K562 (cell line): ENCODE measurements at regions of chr2 and their contacts with region 1.

Region 1: DNA sequence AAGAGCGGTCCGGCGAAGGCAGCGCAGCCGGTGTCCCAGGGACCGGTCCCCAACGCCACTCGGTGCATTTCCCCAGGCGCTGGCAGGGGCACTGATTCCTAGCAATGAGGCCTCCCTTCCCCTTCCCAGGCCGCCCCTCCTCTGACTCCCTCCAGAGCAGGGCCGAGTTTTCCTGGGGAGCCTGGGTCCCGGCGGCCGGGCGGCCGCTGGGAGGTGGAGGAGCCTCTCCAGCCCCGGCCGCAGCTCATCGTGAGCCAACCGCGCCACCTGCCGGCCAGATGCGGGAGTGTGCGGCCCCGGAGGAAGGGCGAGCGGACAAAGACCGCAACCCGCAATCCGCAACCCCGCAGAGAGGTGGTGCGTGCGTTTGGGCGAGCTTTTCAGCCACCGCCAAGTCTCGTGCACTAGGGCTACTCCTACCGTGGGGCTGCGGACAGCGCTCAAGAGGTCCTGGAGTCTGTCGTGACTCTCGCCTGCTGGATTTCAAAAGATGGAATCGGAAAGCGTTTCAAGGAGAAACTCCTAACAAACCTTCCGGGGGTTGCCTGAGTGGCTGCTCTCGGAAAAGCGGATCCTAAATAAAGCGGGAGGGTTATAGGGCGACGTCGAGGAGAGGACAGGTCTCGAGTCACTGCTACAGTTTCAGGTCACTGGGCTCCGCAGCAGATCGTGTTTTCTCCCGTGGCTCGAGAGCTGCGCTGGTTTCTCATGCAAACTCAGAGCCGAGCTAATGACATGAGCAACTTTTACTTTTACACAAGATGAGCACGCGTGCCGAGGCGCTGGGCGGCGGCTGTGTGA is 1.5 kb upstream of the EPHA4 start:
- DNase-seq: peak; percentile 41 to 67 (median 66)
- ATAC-seq: peak; percentile 91
- H3K4me3 ChIP-seq: no peak overlapping the region
- H3K27ac ChIP-seq: no peak overlapping the region
- H3K4me1 ChIP-seq: peaks cover 0 to 25% of the 10 kb centered on the region in 2 experiments; a peak in 1 of 5 replicates
- H3K27me3 ChIP-seq: no peaks in the 10 kb centered on the region; a peak in 1 of 5 replicates
- CTCF ChIP-seq: peak; percentile 57 to 80 (median 59)
- EP300 ChIP-seq: no peak
- POLR2A ChIP-seq: no peak
- RAD21 ChIP-seq: peak; percentile 66 to 74

Region 2: DNA sequence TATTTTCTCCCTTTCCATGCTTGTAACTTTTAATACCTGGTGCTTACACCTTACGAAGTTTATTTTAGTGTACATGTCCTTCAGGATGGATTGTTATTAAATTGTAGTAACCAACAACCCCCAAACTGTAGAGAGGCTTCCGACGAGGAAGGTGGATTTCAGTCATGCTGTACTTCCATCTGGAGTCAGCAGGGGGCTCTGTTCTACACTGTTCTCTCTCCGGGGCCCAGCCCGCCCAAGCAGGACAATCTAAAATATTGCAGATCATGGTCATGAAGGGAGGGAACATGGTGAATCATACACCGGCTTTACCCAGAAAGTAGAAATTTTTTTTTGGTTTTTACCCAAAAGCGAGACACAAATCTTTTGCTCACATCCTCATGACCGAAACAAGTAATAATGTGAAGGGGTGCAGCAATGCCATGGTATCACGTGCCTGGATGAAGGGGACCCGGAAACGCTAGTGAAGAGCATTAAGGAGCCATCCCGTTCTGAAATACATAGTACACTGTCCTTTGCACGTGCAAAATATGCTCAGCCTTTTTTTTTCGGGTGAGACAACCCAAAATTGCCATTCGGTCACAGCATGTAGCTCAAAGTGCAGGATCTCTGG is 886.3 kb before region 1 on chr2:
- CTCF ChIA-PET with region 1: no interaction called
- POLR2A ChIA-PET with region 1: no interaction called
- in situ Hi-C with region 1: no loop called
- intact Hi-C with region 1: loop called (anchors 5 kb)
- DNase-seq: peak; percentile 9 to 30 (median 22)
- ATAC-seq: peak; percentile 49; the same call in 2 of the 3 replicates
- H3K4me3 ChIP-seq: no peak overlapping the region
- H3K27ac ChIP-seq: no peak overlapping the region
- H3K4me1 ChIP-seq: no peaks in the 10 kb centered on the region
- H3K27me3 ChIP-seq: no peaks in the 10 kb centered on the region
- CTCF ChIP-seq: peak; percentile 15 to 48 (median 30); a peak in 3 of 6 replicates
- EP300 ChIP-seq: no peak
- POLR2A ChIP-seq: no peak
- RAD21 ChIP-seq: peak in 1 of 2 experiments; percentile 27; a peak in 2 of 4 replicates